HCT116 (cell line): ENCODE measurements at regions of chrX and their contacts with region 1.

Region 1: DNA sequence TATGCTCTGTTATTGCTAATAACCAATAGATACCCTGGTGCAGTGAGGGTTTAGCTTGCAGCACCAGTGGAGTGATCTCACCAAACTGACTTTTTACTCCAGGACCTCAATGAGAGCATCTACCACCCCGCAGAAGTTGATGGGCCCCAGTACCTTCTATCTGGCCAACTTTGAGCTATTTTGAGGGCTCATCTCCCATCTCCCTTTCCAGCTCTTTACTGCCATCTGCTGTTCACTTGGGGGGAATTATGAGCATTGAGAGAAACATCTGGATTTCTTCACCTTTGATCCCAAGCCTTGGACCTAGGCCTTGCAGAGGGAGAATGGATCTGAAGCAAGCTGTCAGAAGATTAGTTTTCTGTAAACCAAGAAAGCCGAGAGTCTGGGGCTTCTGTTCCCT is 143.6 kb downstream of the TMEM164 start:
- DNase-seq: peak; percentile 8
- ATAC-seq: peak; percentile 78
- H3K4me3 ChIP-seq: no peak overlapping the region
- H3K27ac ChIP-seq: no peak overlapping the region
- H3K4me1 ChIP-seq: no peaks in the 10 kb centered on the region
- H3K27me3 ChIP-seq: no peaks in the 10 kb centered on the region
- CTCF ChIP-seq: peak; percentile 51 to 60 (median 60); a peak in 5 of 6 replicates
- POLR2A ChIP-seq: no peak
- RAD21 ChIP-seq: peak; percentile 58

Region 2: DNA sequence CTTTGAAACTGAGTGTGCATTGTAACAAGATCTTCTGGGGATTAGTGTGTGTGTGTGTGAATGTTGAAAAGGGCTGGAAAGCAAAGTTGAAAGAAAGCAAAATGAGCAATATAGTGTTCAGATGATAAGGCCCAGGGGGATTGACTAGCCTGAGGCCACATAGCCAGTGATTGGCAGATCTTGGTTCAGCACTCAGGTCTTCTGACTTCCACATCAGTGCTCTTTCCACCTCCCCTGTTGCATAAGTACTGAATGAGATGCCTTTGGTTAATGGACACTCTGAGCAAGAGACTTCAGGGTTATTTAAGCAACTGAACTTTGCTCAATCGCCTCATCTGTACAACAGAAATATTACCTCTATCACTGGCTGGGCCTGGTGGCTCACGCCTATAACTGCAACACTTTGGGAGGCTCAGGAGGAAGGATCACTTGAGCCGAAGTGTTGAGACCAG is 23.2 kb before region 1 on chrX:
- CTCF ChIA-PET with region 1: no interaction called
- POLR2A ChIA-PET with region 1: no interaction called
- RAD21 ChIA-PET with region 1: no interaction called
- intact Hi-C with region 1: no loop called
- DNase-seq: no peak
- ATAC-seq: no peak
- H3K4me3 ChIP-seq: no peak overlapping the region
- H3K27ac ChIP-seq: no peak overlapping the region
- H3K4me1 ChIP-seq: no peaks in the 10 kb centered on the region
- H3K27me3 ChIP-seq: no peaks in the 10 kb centered on the region
- CTCF ChIP-seq: no peak
- POLR2A ChIP-seq: no peak
- RAD21 ChIP-seq: no peak

Region 3: GRCh38 chrX:110167952-110168451 is 21.5 kb after region 1 on chrX:
- CTCF ChIA-PET with region 1: no interaction called
- POLR2A ChIA-PET with region 1: no interaction called
- RAD21 ChIA-PET with region 1: no interaction called
- intact Hi-C with region 1: no loop called
- DNase-seq: no peak
- ATAC-seq: peak; percentile 86
- H3K4me3 ChIP-seq: no peak overlapping the region
- H3K27ac ChIP-seq: no peak overlapping the region
- H3K4me1 ChIP-seq: peaks cover 0 to 9% of the 10 kb centered on the region in 2 experiments; a peak in 1 of 4 replicates
- H3K27me3 ChIP-seq: no peaks in the 10 kb centered on the region
- CTCF ChIP-seq: peak; percentile 24 to 71 (median 68); a peak in 5 of 6 replicates
- POLR2A ChIP-seq: no peak
- RAD21 ChIP-seq: peak; percentile 44

Region 4: GRCh38 chrX:110412971-110413721 is 266.6 kb after region 1 on chrX:
- CTCF ChIA-PET with region 1: interaction called, 26 read pairs
- POLR2A ChIA-PET with region 1: no interaction called
- RAD21 ChIA-PET with region 1: no interaction called
- intact Hi-C with region 1: no loop called
- DNase-seq: no peak
- ATAC-seq: peak; percentile 94
- H3K4me3 ChIP-seq: peak overlapping the region; percentile 20 to 43; a peak in 3 of 4 replicates
- H3K27ac ChIP-seq: no peak overlapping the region
- H3K4me1 ChIP-seq: peaks cover 5 to 22% of the 10 kb centered on the region in 2 experiments; a peak in 3 of 4 replicates
- H3K27me3 ChIP-seq: no peaks in the 10 kb centered on the region
- CTCF ChIP-seq: peak; percentile 52 to 79 (median 71); a peak in 5 of 6 replicates
- POLR2A ChIP-seq: no peak
- RAD21 ChIP-seq: peak; percentile 69

Region 5: GRCh38 chrX:110418316-110419235 is 272.1 kb after region 1 on chrX:
- CTCF ChIA-PET with region 1: interaction called, 26 read pairs
- POLR2A ChIA-PET with region 1: no interaction called
- RAD21 ChIA-PET with region 1: no interaction called
- intact Hi-C with region 1: no loop called
- DNase-seq: no peak
- ATAC-seq: peak; percentile 84
- H3K4me3 ChIP-seq: no peak overlapping the region
- H3K27ac ChIP-seq: no peak overlapping the region
- H3K4me1 ChIP-seq: peaks cover 0 to 19% of the 10 kb centered on the region in 2 experiments; a peak in 2 of 4 replicates
- H3K27me3 ChIP-seq: no peaks in the 10 kb centered on the region
- CTCF ChIP-seq: peak; percentile 31 to 52 (median 50); a peak in 5 of 6 replicates
- POLR2A ChIP-seq: no peak
- RAD21 ChIP-seq: peak; percentile 49

Region 6: DNA sequence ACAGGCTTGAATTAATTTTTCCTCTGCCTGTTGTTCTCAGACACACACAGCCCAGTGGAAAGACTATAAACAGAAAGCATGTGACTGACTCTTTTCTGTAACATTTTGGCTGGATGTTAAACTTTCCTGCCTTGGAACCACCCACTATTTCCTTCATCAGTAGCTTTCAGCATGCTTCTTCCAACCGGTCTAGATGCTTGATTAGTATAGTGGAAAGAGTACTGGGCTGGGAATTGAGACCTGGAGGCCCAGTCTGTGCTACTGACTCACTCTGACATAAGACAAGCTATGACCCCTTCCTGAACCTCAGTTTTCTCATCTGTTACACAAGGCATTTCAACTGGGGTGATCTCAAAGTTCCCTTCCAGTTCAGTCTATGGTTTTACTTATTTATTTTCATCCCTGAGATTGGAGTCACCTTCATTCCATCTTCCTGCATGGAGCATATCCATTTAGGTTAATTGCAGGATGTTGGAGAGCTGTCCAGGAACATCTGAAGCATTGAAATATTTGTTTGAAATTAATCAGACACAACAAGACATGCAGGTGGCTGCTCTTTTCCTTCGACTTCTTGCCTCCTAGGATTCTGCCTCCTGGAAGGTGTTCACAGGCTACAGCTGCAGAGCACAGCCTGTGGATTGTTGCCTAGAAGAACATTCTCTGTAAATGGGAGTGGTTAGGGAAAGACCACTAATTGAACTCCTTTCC is 385.5 kb after region 1 on chrX:
- CTCF ChIA-PET with region 1: no interaction called
- POLR2A ChIA-PET with region 1: no interaction called
- RAD21 ChIA-PET with region 1: no interaction called
- intact Hi-C with region 1: no loop called
- DNase-seq: no peak
- ATAC-seq: no peak
- H3K4me3 ChIP-seq: no peak overlapping the region
- H3K27ac ChIP-seq: no peak overlapping the region
- H3K4me1 ChIP-seq: no peaks in the 10 kb centered on the region
- H3K27me3 ChIP-seq: no peaks in the 10 kb centered on the region
- CTCF ChIP-seq: no peak
- POLR2A ChIP-seq: no peak
- RAD21 ChIP-seq: no peak

Region 7: GRCh38 chrX:110806145-110806544 is 659.6 kb after region 1 on chrX:
- CTCF ChIA-PET with region 1: no interaction called
- POLR2A ChIA-PET with region 1: no interaction called
- RAD21 ChIA-PET with region 1: no interaction called
- intact Hi-C with region 1: no loop called
- DNase-seq: no peak
- ATAC-seq: no peak
- H3K4me3 ChIP-seq: no peak overlapping the region
- H3K27ac ChIP-seq: no peak overlapping the region
- H3K4me1 ChIP-seq: no peaks in the 10 kb centered on the region
- H3K27me3 ChIP-seq: peaks cover 5% of the 10 kb centered on the region; the same call in 1 of the 2 replicates
- CTCF ChIP-seq: no peak
- POLR2A ChIP-seq: no peak
- RAD21 ChIP-seq: no peak